Heart left ventricle (tissue), 16 donors: ENCODE measurements at regions of chr18 and their contacts with region 1.

Region 1: DNA sequence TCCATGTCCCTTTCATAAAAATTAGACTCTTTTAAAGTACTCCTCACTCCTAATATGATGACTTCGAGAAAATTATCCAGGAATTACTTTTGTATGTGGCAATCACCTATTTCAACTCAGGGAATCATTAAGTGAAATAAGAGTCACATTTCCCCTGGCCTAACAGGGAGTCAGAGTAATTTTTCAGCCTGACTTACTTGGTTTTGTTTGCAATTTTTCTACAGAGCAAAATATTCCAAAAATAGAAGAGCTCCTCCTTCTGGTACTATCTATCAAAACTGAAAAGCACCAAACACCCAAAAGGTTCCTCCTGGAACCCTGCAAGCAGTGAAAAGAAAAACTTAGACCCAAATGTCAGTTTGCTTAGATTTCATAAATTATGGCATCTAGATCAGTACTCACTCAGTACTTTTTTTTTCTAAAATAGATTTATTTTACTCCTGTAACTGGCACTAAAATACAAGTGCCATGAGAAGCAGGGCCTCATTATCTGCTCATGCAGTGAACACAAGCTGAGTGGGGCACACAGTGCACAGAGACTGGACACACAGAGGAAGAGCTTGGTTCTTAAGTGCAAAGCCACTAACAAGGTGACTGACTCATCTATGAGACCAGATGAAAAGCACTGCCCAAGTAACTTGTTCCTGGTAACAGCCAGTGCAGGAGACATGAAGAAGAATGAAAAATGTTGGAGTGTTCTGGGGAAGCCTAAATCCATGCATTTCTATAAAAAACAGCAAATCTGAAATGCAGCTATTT is 28.7 kb downstream of the ACAA2 start:
- DNase-seq: no peak
- ATAC-seq: peak in 2 of 4 donors; percentile 28 to 36
- H3K4me3 ChIP-seq: no peak overlapping the region
- H3K27ac ChIP-seq: peak overlapping the region in 2 of 12 donors; percentile 35 to 44
- H3K4me1 ChIP-seq: peaks cover 0 to 10% (median 0%) of the 10 kb centered on the region in 12 donors
- H3K27me3 ChIP-seq: no peaks in the 10 kb centered on the region
- CTCF ChIP-seq: peak in 6 of 12 donors; percentile 12 to 39 (median 26)
- POLR2A ChIP-seq: no peak

Region 2: GRCh38 chr18:49550621-49551339 is 233.8 kb before region 1 on chr18:
- intact Hi-C with region 1: loop called in 1 of 10 experiments (anchors 10 kb)
- DNase-seq: no peak
- ATAC-seq: no peak
- H3K4me3 ChIP-seq: no peak overlapping the region
- H3K27ac ChIP-seq: no peak overlapping the region
- H3K4me1 ChIP-seq: no peaks in the 10 kb centered on the region
- H3K27me3 ChIP-seq: peaks cover 0 to 18% (median 0%) of the 10 kb centered on the region in 9 donors
- CTCF ChIP-seq: no peak
- POLR2A ChIP-seq: no peak

Region 3: GRCh38 chr18:49582579-49582978 is 202.0 kb before region 1 on chr18:
- intact Hi-C with region 1: no loop called
- DNase-seq: no peak
- ATAC-seq: no peak
- H3K4me3 ChIP-seq: no peak overlapping the region
- H3K27ac ChIP-seq: no peak overlapping the region
- H3K4me1 ChIP-seq: no peaks in the 10 kb centered on the region
- H3K27me3 ChIP-seq: peaks cover 0 to 7% (median 0%) of the 10 kb centered on the region in 9 donors
- CTCF ChIP-seq: no peak
- POLR2A ChIP-seq: no peak